Activated CD4-positive, alpha-beta memory T cell treated with anti-CD3 and anti-CD28 coated beads for 36 hours (primary cell): ENCODE measurements at regions of chr4 and their contacts with region 1.

Region 1: GRCh38 chr4:122710434-122711308 is 21.8 kb upstream of the BBS12 start:
- DNase-seq: peak; percentile 73
- H3K4me3 Mint-ChIP-seq: peak overlapping the region; percentile 60
- H3K27ac Mint-ChIP-seq: peak overlapping the region; percentile 94
- H3K4me1 Mint-ChIP-seq: peaks cover 72% of the 10 kb centered on the region
- H3K27me3 Mint-ChIP-seq: no peaks in the 10 kb centered on the region

Region 2: GRCh38 chr4:122195718-122196117 is 515.0 kb before region 1 on chr4:
- CTCF ChIA-PET with region 1: no interaction called
- POLR2A ChIA-PET with region 1: no interaction called
- intact Hi-C with region 1: no loop called
- DNase-seq: no peak
- H3K4me3 Mint-ChIP-seq: no peak overlapping the region
- H3K27ac Mint-ChIP-seq: no peak overlapping the region
- H3K4me1 Mint-ChIP-seq: peaks cover 9% of the 10 kb centered on the region
- H3K27me3 Mint-ChIP-seq: no peaks in the 10 kb centered on the region

Region 3: DNA sequence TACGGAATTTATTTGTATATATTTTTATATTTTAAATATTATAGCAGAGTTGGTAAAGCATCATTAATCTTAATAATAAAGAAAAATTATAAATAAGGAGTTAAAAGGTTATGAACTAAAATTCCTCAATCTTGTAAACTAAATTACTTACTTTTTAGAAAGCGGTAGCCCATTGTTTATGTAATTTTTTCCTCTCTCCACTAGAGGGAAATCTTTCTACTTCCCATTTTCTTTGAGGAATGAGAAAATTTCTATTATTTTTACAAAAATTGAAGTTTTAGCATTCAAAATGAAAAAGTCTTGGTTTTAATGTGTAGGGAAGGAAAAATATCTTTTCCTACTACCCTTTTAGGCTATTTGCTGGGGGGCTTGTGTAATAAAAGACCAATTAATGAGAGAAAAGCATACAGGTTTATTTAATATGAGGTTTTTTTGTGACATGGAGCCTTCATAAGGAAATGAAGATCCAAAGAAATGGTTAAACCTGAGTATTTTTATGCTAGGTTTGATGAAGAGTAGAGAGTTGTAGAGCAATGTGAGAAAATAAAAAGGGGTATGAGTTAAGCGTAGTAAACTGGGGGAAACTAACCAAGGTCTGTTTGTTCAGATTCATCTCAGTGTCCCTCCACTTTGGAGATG is 400.6 kb before region 1 on chr4:
- CTCF ChIA-PET with region 1: no interaction called
- POLR2A ChIA-PET with region 1: no interaction called
- intact Hi-C with region 1: loop called (anchors 5 kb)
- DNase-seq: no peak
- H3K4me3 Mint-ChIP-seq: no peak overlapping the region
- H3K27ac Mint-ChIP-seq: no peak overlapping the region
- H3K4me1 Mint-ChIP-seq: peaks cover 5% of the 10 kb centered on the region
- H3K27me3 Mint-ChIP-seq: no peaks in the 10 kb centered on the region

Region 4: DNA sequence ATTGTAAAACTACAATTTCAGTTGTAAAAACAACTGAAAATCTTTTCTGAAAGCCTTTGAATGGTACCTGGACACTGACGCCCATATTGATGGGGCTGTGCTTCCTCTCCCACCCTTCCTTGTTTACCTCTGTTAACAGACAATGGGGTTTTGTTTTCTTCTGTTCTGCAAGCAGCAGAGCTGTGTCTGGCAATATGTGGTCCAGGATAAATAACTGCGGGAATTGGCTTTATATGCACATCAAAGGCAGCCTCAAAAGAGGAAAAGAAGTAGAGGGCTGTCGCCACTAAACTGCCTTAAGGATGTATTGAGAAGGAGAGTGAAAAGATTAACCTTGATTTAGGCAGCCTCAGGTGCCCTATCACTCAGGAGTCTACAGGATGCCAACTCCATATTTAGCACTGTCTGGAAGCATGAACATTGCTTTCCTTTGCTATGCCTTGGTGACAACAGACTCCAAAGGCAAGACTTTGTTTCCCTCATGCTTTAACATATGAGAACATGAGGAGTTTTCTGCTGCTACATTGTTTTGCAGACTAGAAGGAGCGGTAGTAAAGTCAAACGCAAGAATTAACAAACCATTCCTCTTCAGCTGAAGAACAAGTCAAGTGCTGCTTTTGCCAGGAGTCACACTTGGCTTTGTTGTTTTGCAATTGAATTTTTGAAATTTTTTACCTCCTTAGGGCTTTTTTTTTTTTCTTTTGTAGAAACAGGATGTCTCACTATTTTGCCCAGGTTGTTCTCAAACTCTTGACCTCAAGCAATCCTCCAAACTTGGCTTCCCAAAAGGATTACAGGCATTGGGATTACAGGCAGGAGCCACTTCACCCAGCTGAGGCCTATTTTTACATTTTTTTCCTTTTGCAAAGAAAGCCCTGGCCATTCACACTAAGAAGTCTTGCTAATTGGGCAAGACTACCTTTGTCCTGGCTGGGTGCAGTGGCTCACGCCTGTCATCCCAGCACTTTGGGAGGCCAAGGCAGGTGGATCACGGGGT is 92.8 kb before region 1 on chr4:
- CTCF ChIA-PET with region 1: interaction called, 5 read pairs
- POLR2A ChIA-PET with region 1: interaction called, 4 read pairs
- intact Hi-C with region 1: loop called (anchors 1 kb)
- DNase-seq: no peak
- H3K4me3 Mint-ChIP-seq: peak overlapping the region; percentile 76
- H3K27ac Mint-ChIP-seq: peak overlapping the region; percentile 87
- H3K4me1 Mint-ChIP-seq: peaks cover 70% of the 10 kb centered on the region
- H3K27me3 Mint-ChIP-seq: no peaks in the 10 kb centered on the region

Region 5: DNA sequence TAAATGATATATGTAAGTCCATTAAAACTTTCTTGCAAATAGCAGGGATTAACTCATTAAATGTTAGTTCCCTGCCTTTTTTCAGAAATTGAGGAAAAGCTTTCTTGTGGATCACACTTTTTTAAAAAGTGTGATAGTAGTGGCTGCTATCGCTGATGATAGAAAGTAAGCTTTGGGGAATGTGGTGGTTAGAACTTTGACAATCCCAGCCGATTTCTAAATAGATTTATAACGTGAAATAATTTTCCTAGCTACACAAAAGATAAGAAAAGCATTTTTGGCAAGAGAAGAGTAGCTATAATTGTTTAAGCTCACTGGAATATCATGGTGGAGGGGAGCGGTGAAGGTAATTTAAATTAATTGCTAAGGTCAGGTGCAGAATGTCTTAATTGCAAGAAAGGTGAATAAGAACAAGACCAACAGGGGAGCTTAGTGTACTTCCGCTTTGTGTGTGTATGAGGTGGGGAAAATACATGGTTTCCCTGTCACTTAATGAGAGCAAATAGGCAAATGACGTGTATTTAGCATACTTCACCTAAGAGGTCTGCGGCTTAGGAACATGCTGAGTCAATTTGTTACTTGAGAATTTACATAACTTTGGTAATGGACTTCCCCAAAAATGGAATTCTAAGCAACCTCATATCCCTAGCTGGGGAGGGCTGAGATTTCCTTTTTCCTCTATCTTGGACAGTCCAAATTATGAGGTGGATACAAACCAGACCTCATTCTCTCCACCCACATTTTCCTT is 78.1 kb before region 1 on chr4:
- CTCF ChIA-PET with region 1: no interaction called
- POLR2A ChIA-PET with region 1: interaction called, 4 read pairs
- intact Hi-C with region 1: loop called (anchors 1 kb)
- DNase-seq: no peak
- H3K4me3 Mint-ChIP-seq: peak overlapping the region; percentile 21
- H3K27ac Mint-ChIP-seq: peak overlapping the region; percentile 55
- H3K4me1 Mint-ChIP-seq: peaks cover 62% of the 10 kb centered on the region
- H3K27me3 Mint-ChIP-seq: no peaks in the 10 kb centered on the region

Region 6: GRCh38 chr4:122689972-122690371 is 20.7 kb before region 1 on chr4:
- CTCF ChIA-PET with region 1: no interaction called
- POLR2A ChIA-PET with region 1: interaction called, 4 read pairs
- intact Hi-C with region 1: loop called (anchors 1 kb)
- DNase-seq: peak; percentile 58
- H3K4me3 Mint-ChIP-seq: no peak overlapping the region
- H3K27ac Mint-ChIP-seq: peak overlapping the region; percentile 16
- H3K4me1 Mint-ChIP-seq: peaks cover 57% of the 10 kb centered on the region
- H3K27me3 Mint-ChIP-seq: peaks cover 8% of the 10 kb centered on the region

Region 7: DNA sequence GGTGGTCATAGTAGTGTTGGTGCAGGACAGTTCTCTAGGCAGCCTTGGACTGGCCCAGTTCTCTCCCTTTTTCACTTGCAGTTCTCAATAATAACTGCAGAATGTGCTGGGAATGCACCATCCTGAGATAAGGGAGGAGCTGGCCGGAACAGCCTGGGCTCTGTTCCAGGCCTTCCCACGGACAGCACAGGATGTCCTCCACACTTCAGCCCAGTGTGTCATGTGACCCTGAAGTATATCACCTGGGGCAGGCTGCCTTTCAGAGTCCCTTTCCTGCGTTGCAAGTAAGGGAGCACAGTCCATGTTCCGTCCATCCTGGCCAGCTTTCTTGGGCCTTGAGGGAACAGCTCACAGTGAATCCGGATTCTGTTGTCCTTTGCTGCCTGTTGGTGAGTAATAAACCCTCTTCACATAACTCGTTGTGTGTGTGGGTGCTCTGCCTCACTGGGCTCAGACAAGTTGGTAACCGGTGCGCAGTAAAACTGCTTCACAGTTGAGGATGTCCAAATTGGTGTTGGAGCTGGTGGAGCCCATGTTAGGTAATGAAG is 10.4 kb before region 1 on chr4:
- CTCF ChIA-PET with region 1: interaction called, 7 read pairs
- POLR2A ChIA-PET with region 1: interaction called, 4 read pairs
- intact Hi-C with region 1: loop called (anchors 1 kb)
- DNase-seq: peak; percentile 15
- H3K4me3 Mint-ChIP-seq: peak overlapping the region; percentile 64
- H3K27ac Mint-ChIP-seq: peak overlapping the region; percentile 92
- H3K4me1 Mint-ChIP-seq: peaks cover 48% of the 10 kb centered on the region
- H3K27me3 Mint-ChIP-seq: peaks cover 5% of the 10 kb centered on the region

Region 8: GRCh38 chr4:122873821-122874593 is 163.3 kb after region 1 on chr4:
- CTCF ChIA-PET with region 1: no interaction called
- POLR2A ChIA-PET with region 1: no interaction called
- intact Hi-C with region 1: no loop called
- DNase-seq: no peak
- H3K4me3 Mint-ChIP-seq: no peak overlapping the region
- H3K27ac Mint-ChIP-seq: no peak overlapping the region
- H3K4me1 Mint-ChIP-seq: no peaks in the 10 kb centered on the region
- H3K27me3 Mint-ChIP-seq: peaks cover 31% of the 10 kb centered on the region

Region 9: DNA sequence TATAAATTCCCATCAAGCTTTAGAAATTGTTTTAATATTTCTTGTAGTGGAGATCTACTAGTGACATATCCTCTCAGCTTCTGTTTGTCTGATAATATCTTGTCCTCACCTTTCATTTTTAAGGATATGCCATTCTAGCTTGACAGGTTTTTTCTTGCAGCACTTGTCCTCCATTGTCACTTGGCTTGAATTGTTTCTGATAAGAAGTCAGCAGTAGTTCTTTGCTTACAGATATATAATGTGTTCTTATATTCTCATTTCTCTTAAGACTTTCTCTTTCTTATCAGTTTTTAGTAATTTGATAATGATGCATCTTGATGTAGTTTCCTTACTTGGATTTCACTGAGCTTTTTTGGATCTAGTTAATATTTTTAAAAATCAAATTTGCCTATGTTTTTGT is 332.3 kb after region 1 on chr4:
- CTCF ChIA-PET with region 1: no interaction called
- POLR2A ChIA-PET with region 1: no interaction called
- intact Hi-C with region 1: no loop called
- DNase-seq: no peak
- H3K4me3 Mint-ChIP-seq: no peak overlapping the region
- H3K27ac Mint-ChIP-seq: no peak overlapping the region
- H3K4me1 Mint-ChIP-seq: no peaks in the 10 kb centered on the region
- H3K27me3 Mint-ChIP-seq: no peaks in the 10 kb centered on the region